ENCODE measurements at regions of chr16 and their contacts with region 1.

Region 1: DNA sequence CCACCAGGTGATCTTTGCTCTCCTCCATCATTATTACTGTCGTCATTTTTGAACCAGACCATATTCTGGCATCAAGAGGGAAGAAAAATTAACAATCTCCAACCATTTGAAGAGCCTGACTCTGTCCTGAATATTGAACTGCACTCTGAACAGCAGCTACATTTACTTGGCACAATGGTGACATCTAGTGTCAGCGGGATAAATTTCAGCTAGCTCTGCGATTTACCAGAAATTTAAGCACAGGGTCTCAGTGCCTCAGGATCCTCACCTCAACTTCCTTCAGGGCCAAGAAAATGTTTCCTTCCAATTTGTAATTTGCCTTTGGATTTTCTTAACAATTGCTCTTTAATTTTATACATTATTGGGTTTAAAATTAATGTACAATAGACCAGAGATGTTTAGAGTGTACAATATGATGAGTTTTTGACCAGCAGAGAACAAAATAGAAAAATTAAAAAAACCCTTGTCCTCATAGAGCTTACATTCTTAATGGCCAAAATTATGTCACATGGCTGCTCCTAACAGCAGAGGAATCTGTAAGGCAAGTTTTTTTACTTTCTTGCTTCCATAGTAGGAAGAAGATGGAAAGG is 10.7 kb upstream of the ZNF19 start:
- DNase-seq: peak; percentile 51 to 72 (median 60)
- ATAC-seq: peak; percentile 86
- H3K4me3 ChIP-seq: no peak overlapping the region
- H3K27ac ChIP-seq: no peak overlapping the region
- H3K4me1 ChIP-seq: no peaks in the 10 kb centered on the region
- H3K27me3 ChIP-seq: peaks cover 3 to 16% of the 10 kb centered on the region in 2 experiments; a peak in 3 of 5 replicates
- CTCF ChIP-seq: peak; percentile 66 to 93 (median 77)
- EP300 ChIP-seq: no peak
- POLR2A ChIP-seq: no peak
- RAD21 ChIP-seq: peak; percentile 87 to 92

Region 2: GRCh38 chr16:71412270-71413160 is 87.4 kb before region 1 on chr16:
- CTCF ChIA-PET with region 1: interaction called, 53 read pairs
- POLR2A ChIA-PET with region 1: no interaction called
- in situ Hi-C with region 1: loop called (anchors 5 kb)
- intact Hi-C with region 1: loop called (anchors 2 kb)
- DNase-seq: peak; percentile 74 to 81 (median 76)
- ATAC-seq: peak; percentile 97
- H3K4me3 ChIP-seq: no peak overlapping the region
- H3K27ac ChIP-seq: no peak overlapping the region
- H3K4me1 ChIP-seq: peaks cover 0 to 10% of the 10 kb centered on the region in 2 experiments; a peak in 3 of 5 replicates
- H3K27me3 ChIP-seq: peaks cover 4 to 19% of the 10 kb centered on the region in 2 experiments
- CTCF ChIP-seq: peak; percentile 82 to 90 (median 89)
- EP300 ChIP-seq: no peak
- POLR2A ChIP-seq: no peak
- RAD21 ChIP-seq: peak; percentile 69 to 73

Region 3: DNA sequence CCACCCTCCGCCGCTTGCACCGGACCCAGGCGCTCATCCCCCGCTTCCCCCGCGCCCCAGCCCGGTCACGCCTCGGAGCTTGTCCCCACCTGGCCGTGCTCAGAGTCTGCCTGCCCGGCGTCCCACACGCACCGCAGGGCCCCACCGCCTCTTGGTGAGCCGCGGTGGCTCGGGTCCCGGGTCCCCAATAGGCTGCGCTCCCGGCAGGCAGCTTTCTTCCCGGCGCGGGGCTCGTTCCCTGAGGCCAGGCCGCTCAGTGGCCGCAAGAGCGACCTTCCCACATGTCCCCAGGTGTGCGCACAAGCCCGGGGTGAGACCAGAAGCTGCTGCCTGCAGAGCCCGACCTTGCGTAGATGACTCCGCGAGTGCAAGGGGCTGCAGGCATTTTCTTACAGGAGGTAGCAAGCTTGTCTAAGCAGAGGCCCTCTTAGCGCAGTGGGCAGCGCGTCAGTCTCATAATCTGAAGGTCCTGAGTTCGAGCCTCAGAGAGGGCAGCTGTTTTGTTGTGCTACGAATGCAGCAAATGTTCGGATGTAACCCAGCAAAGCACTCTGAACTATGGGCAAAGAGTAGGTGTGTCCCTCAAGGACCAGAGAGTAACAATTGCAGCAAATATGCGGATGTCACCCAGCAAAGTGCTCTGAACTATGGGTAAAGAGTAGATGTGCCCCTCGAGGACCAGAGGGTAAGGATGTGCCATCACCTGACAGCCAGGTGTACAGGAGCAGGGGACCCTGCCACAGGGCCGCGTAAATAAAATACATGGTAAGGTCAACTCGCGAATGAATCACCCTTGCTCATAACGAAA is 73.6 kb before region 1 on chr16:
- CTCF ChIA-PET with region 1: no interaction called
- POLR2A ChIA-PET with region 1: no interaction called
- in situ Hi-C with region 1: no loop called
- intact Hi-C with region 1: loop called (anchors 5 kb)
- DNase-seq: peak; percentile 59 to 70 (median 68)
- ATAC-seq: peak; percentile 83
- H3K4me3 ChIP-seq: peak overlapping the region; percentile 11; the same call in 1 of the 2 replicates
- H3K27ac ChIP-seq: no peak overlapping the region
- H3K4me1 ChIP-seq: peaks cover 15 to 19% of the 10 kb centered on the region in 2 experiments; a peak in 4 of 5 replicates
- H3K27me3 ChIP-seq: peaks cover 15 to 53% of the 10 kb centered on the region in 2 experiments; a peak in 4 of 5 replicates
- CTCF ChIP-seq: no peak
- EP300 ChIP-seq: no peak
- POLR2A ChIP-seq: no peak
- RAD21 ChIP-seq: no peak

Region 4: GRCh38 chr16:71441348-71441781 is 58.5 kb before region 1 on chr16:
- CTCF ChIA-PET with region 1: interaction called, 14 read pairs
- POLR2A ChIA-PET with region 1: no interaction called
- in situ Hi-C with region 1: no loop called
- intact Hi-C with region 1: no loop called
- DNase-seq: peak in 2 of 4 experiments; percentile 27 to 31
- ATAC-seq: peak; percentile 70
- H3K4me3 ChIP-seq: no peak overlapping the region
- H3K27ac ChIP-seq: no peak overlapping the region
- H3K4me1 ChIP-seq: peaks cover 0 to 8% of the 10 kb centered on the region in 2 experiments; a peak in 2 of 5 replicates
- H3K27me3 ChIP-seq: peaks cover 10 to 15% of the 10 kb centered on the region in 2 experiments; a peak in 4 of 5 replicates
- CTCF ChIP-seq: peak; percentile 18 to 30 (median 24); a peak in 1 of 6 replicates
- EP300 ChIP-seq: no peak
- POLR2A ChIP-seq: no peak
- RAD21 ChIP-seq: no peak

Region 5: GRCh38 chr16:71484006-71484893 is 15.6 kb before region 1 on chr16:
- CTCF ChIA-PET with region 1: interaction called, 7 read pairs
- POLR2A ChIA-PET with region 1: no interaction called
- in situ Hi-C with region 1: no loop called
- intact Hi-C with region 1: loop called (anchors 1 kb)
- DNase-seq: peak; percentile 84 to 92 (median 86)
- ATAC-seq: peak; percentile 94
- H3K4me3 ChIP-seq: peak overlapping the region; percentile 85
- H3K27ac ChIP-seq: peak overlapping the region; percentile 74
- H3K4me1 ChIP-seq: peaks cover 2 to 9% of the 10 kb centered on the region in 2 experiments; a peak in 4 of 5 replicates
- H3K27me3 ChIP-seq: no peaks in the 10 kb centered on the region
- CTCF ChIP-seq: no peak
- EP300 ChIP-seq: no peak
- POLR2A ChIP-seq: peak; percentile 85
- RAD21 ChIP-seq: no peak

Region 6: DNA sequence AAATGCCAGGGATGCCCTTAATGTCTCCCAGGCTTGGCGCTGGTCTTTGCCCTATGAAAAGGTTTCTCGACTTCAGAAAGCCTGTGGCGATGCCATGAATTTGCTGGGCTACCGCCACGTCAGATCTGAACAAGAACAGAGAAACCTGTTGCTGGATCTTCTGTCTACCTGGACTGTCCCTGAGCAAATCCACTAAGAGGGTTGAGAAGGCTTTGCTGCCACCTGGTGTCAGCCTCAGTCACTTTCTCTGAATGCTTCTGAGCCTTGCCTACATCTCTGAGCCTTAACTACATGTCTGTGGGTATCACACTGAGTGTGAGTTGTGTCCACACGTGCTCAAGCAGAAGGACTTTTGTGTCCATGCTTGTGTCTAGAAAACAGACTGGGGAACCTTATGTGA is 37.8 kb after region 1 on chr16:
- CTCF ChIA-PET with region 1: no interaction called
- POLR2A ChIA-PET with region 1: interaction called, 3 read pairs
- in situ Hi-C with region 1: no loop called
- intact Hi-C with region 1: loop called (anchors 5 kb)
- DNase-seq: peak; percentile 47 to 64 (median 55)
- ATAC-seq: peak; percentile 90
- H3K4me3 ChIP-seq: no peak overlapping the region
- H3K27ac ChIP-seq: no peak overlapping the region
- H3K4me1 ChIP-seq: no peaks in the 10 kb centered on the region
- H3K27me3 ChIP-seq: peaks cover 9 to 21% of the 10 kb centered on the region in 2 experiments
- CTCF ChIP-seq: peak; percentile 72 to 73 (median 72)
- EP300 ChIP-seq: no peak
- POLR2A ChIP-seq: no peak
- RAD21 ChIP-seq: peak; percentile 33 to 73

Region 7: DNA sequence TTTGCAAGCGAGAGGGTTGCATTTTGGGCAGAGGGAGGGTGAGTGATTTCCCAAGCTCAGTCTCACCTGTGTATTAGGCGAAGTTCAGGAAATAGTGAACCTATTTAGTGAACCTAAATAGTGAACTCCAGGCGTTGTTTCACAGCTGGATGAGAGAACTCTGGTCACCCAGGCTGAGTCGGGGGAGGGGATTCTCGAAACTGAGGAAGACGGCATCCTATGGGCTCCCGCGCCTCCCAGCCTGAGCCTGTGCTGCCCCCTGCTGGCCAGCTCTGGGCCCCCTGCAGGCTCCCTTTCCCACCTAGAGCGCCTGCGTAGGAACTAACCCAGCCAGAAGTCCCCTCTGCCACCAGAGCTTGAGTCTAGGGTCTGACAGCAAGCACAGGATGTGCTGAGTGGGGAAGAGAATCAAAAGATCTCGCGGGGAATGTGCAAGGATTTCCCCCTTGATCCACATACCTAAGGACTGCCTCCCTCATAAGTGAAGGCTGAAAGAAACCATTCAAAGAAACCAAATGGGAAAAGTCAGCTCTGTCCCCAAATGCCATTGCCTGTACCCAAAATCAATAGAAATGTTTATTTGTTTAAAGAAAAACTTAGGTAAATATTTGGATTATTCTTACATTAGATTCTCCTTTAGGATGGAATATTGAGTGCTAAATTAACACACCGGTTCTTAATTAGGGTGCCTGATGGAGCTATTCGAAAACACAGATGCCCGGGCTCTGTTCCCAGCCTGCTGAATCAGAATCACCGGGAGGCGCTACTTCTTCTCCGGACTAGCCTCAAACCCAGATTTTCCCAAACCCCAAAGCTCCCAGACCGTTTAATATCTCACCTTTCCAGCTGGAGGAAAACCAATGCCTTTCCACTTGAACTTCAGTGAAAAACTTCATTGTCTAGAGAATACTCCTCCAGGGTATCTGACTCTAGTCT is 111.3 kb after region 1 on chr16:
- CTCF ChIA-PET with region 1: no interaction called
- POLR2A ChIA-PET with region 1: no interaction called
- in situ Hi-C with region 1: no loop called
- intact Hi-C with region 1: loop called (anchors 1 kb)
- DNase-seq: peak; percentile 80 to 91 (median 87)
- ATAC-seq: peak; percentile 99
- H3K4me3 ChIP-seq: no peak overlapping the region
- H3K27ac ChIP-seq: no peak overlapping the region
- H3K4me1 ChIP-seq: peaks cover 0 to 3% of the 10 kb centered on the region in 2 experiments; a peak in 1 of 5 replicates
- H3K27me3 ChIP-seq: peaks cover 3 to 17% of the 10 kb centered on the region in 2 experiments; a peak in 3 of 5 replicates
- CTCF ChIP-seq: peak; percentile 90 to 97 (median 95)
- EP300 ChIP-seq: no peak
- POLR2A ChIP-seq: no peak
- RAD21 ChIP-seq: peak; percentile 77 to 87

Measured in K562 (cell line).